ENCODE measurements at regions of chr4 and their contacts with region 1.

Region 1: DNA sequence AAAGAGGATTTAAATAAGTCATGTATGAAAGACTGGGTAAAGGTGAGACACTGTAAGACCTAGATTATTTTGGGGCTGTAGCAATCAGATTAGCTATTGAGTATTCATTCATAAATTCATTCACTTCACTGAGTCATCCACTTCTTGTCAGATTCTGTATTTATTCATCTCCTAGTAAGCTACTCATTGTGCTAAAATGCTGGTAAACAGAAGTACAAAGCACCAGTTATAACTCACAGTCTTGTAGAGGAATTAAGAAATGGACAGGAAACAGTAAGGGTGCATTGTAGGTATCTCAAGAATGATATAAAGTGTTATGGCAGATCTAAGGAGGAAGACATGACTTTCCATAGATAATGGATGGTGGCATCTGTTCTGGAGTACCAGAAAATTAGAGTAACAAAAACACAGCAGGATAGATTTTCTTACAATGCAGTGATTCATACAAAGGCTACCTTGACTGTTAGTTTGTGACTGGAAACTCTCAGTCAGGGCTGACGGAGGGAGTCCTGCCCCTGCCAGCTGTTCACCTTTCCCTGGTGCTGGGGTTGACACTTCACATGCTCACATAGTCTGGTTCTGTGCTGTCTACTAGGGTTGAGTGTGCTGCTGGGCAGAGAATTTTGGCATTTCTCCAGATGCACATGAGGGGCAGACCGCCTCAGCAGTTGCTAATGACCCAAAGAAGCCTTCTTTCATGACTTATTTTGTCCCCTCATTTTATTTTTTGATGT is 26.5 kb upstream of the HAND2 start:
- DNase-seq: no peak
- H3K4me3 Mint-ChIP-seq: no peak overlapping the region
- H3K27ac Mint-ChIP-seq: no peak overlapping the region
- H3K4me1 Mint-ChIP-seq: no peaks in the 10 kb centered on the region
- H3K27me3 Mint-ChIP-seq: peaks cover 59% of the 10 kb centered on the region
- CTCF ChIP-seq: no peak

Region 2: GRCh38 chr4:173494013-173494970 is 62.3 kb before region 1 on chr4:
- CTCF ChIA-PET with region 1: no interaction called
- POLR2A ChIA-PET with region 1: no interaction called
- intact Hi-C with region 1: no loop called
- DNase-seq: peak; percentile 76
- H3K4me3 Mint-ChIP-seq: peak overlapping the region; percentile 67
- H3K27ac Mint-ChIP-seq: no peak overlapping the region
- H3K4me1 Mint-ChIP-seq: peaks cover 8% of the 10 kb centered on the region
- H3K27me3 Mint-ChIP-seq: peaks cover 14% of the 10 kb centered on the region
- CTCF ChIP-seq: peak; percentile 61

Region 3: DNA sequence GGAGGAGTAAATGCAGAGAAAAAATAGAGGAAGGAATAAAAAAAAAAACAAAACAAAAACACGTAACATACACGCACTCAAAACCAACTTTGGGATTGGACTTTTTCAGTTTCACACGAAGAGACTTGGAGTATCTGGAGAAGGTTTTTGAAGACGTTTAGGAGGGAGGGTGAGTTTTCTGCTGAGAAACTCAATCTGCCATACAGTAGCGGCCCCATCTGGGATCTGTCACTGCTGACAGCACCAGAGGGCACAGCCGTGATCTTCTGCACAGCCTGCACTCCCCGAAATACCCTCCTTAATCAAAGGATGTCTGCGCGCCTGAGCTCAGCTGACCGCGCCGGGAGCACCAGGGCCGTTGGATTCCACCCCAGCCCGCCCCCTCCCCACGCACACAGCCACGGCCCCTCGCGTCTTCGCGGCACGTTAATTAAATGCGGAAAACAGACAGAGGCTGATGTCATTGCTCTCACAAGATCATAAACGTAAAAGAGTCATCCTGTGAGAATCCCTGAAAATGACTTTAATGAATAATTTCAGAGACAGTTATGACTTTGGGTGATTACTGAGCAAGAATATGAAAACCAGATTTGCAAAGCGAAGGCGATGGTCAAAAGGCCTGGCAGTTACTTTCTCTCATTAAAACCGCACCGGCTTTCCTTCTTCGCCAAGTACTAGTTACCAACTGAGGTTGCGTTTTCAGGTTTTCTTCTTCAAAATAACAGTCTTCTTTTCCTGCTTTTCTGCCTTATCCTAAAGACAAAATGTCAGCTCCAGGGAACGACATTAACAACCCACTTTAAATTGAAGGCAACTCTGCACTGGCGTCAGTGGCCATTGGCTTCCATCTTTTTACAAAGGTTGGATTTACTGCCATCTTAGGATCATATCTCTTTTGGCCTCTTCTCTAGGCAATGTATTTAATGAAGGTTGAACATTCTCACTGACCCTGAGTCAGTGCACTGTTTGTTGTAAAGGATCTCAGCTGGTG is 37.2 kb before region 1 on chr4:
- CTCF ChIA-PET with region 1: interaction called, 3 read pairs
- POLR2A ChIA-PET with region 1: no interaction called
- intact Hi-C with region 1: loop called (anchors 1 kb)
- DNase-seq: no peak
- H3K4me3 Mint-ChIP-seq: no peak overlapping the region
- H3K27ac Mint-ChIP-seq: no peak overlapping the region
- H3K4me1 Mint-ChIP-seq: no peaks in the 10 kb centered on the region
- H3K27me3 Mint-ChIP-seq: peaks cover 22% of the 10 kb centered on the region
- CTCF ChIP-seq: no peak